ENCODE measurements at regions of chr14 and their contacts with region 1.

Region 1: GRCh38 chr14:23057757-23058653 is 685 bp upstream of the CDH24 start:
- DNase-seq: peak; percentile 89
- H3K4me3 Mint-ChIP-seq: peak overlapping the region; percentile 78
- H3K27ac Mint-ChIP-seq: peak overlapping the region; percentile 68
- H3K4me1 Mint-ChIP-seq: peaks cover 20% of the 10 kb centered on the region
- H3K27me3 Mint-ChIP-seq: peaks cover 8% of the 10 kb centered on the region

Region 2: GRCh38 chr14:22973217-22974032 is 84.6 kb before region 1 on chr14:
- CTCF ChIA-PET with region 1: interaction called, 22 read pairs
- POLR2A ChIA-PET with region 1: no interaction called
- DNase-seq: peak; percentile 57
- H3K4me3 Mint-ChIP-seq: no peak overlapping the region
- H3K27ac Mint-ChIP-seq: no peak overlapping the region
- H3K4me1 Mint-ChIP-seq: no peaks in the 10 kb centered on the region
- H3K27me3 Mint-ChIP-seq: peaks cover 14% of the 10 kb centered on the region

Region 3: DNA sequence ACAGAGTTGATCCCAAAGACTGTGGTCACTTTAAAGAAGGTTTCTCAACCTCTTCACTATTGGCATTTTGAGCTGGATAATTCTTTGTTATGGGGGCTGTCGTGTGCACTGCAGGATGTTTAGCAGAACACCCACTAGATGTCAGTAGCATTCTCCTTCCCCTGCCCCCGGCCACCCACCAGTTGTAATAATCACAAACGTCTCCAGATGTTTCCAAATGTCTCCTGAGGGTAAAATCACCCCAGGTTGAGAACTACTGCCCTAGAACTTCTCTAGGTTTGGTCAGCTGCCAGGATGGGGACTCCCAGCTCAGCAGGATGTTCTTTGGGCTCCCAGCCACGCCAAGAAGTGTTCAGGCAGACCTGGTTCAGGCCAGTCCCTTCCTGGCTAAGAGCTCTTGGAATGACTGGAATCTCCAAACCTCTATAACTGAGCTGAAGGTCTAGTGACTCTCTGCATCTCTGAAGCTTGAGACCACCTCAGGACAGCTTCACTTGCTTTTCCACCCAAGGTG is 63.2 kb before region 1 on chr14:
- CTCF ChIA-PET with region 1: interaction called, 61 read pairs
- POLR2A ChIA-PET with region 1: interaction called, 3 read pairs
- DNase-seq: peak; percentile 45
- H3K4me3 Mint-ChIP-seq: no peak overlapping the region
- H3K27ac Mint-ChIP-seq: no peak overlapping the region
- H3K4me1 Mint-ChIP-seq: no peaks in the 10 kb centered on the region
- H3K27me3 Mint-ChIP-seq: no peaks in the 10 kb centered on the region

Region 4: DNA sequence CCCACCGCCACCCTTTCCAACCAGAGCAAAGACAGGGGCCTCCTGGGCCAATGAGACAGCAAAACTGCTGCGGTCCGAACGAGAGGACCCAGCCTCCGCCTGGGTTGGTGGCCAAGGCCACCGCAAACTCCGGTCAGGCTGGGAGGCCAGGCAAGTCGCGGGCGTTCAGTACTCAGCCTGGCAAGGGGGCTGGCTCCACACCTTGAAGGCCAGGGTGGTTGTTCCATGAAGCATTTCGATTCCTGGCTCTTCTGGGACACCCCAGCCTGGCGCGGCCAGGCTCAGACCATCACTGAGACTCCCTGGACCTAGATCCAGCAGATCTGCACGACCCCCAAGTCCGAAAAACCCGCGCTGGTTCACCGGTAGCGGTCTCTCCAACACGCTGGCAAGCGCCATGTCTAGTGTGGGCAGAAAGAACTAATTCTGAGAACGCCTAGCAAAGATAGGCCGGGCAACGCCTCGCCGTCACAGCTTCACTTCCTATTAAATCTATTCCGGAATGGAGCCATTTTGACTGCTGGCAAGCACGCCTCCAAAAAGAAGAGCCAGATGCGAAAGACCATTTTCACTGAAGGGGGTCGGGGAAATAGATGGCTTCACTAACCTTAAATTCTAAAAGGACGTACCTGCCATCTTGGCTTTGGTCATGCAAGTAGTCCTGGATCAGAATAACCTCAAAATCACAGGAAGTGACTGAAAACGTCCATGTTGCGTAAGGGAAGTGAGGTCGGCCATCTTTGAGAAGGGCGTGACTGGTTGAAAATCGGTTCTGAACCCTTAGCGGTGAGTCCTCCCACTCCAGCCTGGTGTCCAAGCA is 23.3 kb before region 1 on chr14 and contains the start of gene PSMB5:
- CTCF ChIA-PET with region 1: interaction called, 20 read pairs
- POLR2A ChIA-PET with region 1: no interaction called
- DNase-seq: peak; percentile 95
- H3K4me3 Mint-ChIP-seq: peak within 1 kb of the TSS; percentile 93
- H3K27ac Mint-ChIP-seq: peak within 1 kb of the TSS; percentile 98
- H3K4me1 Mint-ChIP-seq: peaks cover 34% of the 10 kb centered on the region
- H3K27me3 Mint-ChIP-seq: no peaks in the 10 kb centered on the region
- total RNA-seq, gene PSMB5: 60.4 to 60.7 TPM

Region 5: GRCh38 chr14:23068476-23069412 is 10.7 kb after region 1 on chr14:
- CTCF ChIA-PET with region 1: interaction called, 48 read pairs
- POLR2A ChIA-PET with region 1: interaction called, 4 read pairs
- DNase-seq: peak; percentile 87
- H3K4me3 Mint-ChIP-seq: peak overlapping the region; percentile 22
- H3K27ac Mint-ChIP-seq: peak overlapping the region; percentile 69
- H3K4me1 Mint-ChIP-seq: peaks cover 37% of the 10 kb centered on the region
- H3K27me3 Mint-ChIP-seq: no peaks in the 10 kb centered on the region

Region 6: DNA sequence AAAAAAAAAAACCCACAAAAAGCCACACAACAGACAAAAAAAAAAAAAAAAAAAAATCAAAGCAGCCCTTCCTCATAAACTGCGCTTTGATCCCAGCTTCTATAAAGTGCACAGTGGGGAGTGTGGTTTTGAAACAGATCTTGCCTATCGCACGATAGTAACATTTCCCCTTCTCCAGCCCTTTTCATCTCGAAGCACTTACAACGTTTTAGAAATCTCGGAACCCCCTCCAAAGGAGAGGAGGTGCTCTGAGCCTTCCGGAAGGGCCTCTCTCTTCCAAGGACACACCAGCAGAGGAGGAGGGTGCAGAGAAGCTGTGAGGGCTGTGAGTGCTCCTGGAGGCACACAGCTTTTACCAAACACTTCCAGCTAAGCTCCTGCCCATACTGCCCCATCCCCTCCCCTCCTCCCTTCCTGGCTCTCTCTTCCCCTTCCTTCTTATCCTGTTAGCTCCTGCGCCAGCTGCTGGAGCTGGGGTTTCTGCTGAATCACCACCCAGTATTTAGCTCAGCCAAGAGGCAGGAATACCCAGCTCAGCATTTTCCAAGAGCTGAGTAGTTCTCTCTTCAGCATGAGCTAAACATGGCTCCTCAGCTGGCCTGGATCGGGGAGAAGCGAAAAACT is 97.1 kb after region 1 on chr14:
- CTCF ChIA-PET with region 1: no interaction called
- POLR2A ChIA-PET with region 1: no interaction called
- DNase-seq: no peak
- H3K4me3 Mint-ChIP-seq: peak overlapping the region; percentile 12
- H3K27ac Mint-ChIP-seq: no peak overlapping the region
- H3K4me1 Mint-ChIP-seq: peaks cover 23% of the 10 kb centered on the region
- H3K27me3 Mint-ChIP-seq: peaks cover 19% of the 10 kb centered on the region